ENCODE measurements at regions of chr1 and their contacts with region 1.

Region 1: GRCh38 chr1:12658531-12659453 is 14.9 kb downstream of the AADACL4 start:
- DNase-seq: peak; percentile 88
- ATAC-seq: peak; percentile 92

Region 2: DNA sequence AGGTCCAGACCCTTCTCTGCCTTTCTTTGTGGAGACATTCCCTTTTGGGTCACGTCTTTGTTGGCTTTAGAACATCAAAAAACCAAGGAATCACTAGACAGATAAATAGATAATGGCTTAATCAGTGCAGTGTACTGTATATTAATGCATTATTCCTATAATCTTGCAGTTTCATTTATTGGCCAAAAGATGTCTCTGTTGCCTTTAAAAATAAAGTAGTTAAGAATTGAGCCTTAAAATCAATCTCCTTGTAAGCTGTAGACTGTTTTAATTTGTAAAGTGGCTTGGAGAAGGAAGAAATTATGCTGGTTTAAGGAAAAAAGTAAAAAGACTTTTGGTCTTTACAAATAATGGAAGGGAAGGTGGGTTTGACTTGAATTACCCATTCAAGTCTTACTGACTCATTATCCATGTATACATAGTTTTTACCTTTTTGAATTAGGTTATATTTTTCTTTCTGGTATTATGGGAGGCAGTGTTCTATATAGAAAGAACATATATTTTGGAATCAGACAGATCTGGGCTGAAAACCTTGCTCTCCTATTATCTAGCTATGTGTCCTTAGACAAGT is 344.4 kb before region 1 on chr1:
- intact Hi-C with region 1: loop called (anchors 5 kb)
- DNase-seq: no peak
- ATAC-seq: peak; percentile 73

Region 3: GRCh38 chr1:12619792-12620487 is 38.9 kb before region 1 on chr1:
- intact Hi-C with region 1: no loop called
- DNase-seq: peak; percentile 92
- ATAC-seq: peak; percentile 67

Region 4: GRCh38 chr1:12728391-12728790 is 69.6 kb after region 1 on chr1:
- intact Hi-C with region 1: no loop called
- DNase-seq: no peak
- ATAC-seq: no peak